ENCODE measurements at regions of chr1 and their contacts with region 1.

Region 1: DNA sequence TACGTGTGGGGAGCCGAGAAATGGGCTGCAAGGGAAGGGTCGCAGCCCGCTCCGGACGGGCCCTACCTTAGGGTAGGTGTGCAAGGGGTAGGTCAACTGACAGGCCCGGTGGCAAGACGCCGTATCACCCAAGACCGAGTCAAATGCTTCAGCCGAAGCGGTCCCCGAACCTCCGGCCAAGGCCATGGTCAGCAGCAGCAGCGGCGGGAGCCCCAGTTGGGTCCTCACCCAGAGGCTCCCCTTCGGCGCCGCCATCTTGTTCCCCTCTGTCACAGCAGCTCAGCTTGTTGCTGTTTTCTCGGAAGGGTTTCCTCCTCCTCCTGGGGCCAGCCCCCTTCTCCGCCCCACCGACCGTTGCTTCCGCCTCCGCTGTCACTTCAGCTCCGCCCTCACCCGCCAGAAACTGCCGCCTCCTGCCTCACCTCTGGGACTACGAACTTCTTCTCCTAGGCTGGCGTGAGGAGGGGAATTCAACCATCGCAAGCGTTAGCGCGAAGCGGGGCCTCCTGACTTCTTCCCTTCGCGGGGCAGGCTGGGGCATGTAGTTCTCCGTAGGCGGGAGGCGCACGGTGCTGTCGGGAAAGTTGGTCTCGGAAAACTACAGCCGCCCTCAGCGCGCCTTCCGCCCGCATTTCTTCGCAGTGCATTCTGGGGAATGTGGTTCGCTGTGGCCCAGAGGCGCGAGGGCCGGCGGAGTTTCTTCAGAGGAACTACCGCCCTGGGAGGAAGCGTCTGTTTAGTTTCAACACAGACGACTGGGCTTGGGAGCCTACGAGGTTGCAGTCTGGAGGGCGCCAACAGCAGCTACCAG is at the starts of genes TCEANC2 and TMEM59:
- DNase-seq: peak; percentile 99
- H3K4me3 Mint-ChIP-seq: no peak within 1 kb of the TSS
- H3K27ac Mint-ChIP-seq: no peak within 1 kb of the TSS
- H3K4me1 Mint-ChIP-seq: peaks cover 37% of the 10 kb centered on the region
- H3K27me3 Mint-ChIP-seq: no peaks in the 10 kb centered on the region
- total RNA-seq, gene TCEANC2: 13.0 TPM
- total RNA-seq, gene TMEM59: 140 to 142 TPM

Region 2: DNA sequence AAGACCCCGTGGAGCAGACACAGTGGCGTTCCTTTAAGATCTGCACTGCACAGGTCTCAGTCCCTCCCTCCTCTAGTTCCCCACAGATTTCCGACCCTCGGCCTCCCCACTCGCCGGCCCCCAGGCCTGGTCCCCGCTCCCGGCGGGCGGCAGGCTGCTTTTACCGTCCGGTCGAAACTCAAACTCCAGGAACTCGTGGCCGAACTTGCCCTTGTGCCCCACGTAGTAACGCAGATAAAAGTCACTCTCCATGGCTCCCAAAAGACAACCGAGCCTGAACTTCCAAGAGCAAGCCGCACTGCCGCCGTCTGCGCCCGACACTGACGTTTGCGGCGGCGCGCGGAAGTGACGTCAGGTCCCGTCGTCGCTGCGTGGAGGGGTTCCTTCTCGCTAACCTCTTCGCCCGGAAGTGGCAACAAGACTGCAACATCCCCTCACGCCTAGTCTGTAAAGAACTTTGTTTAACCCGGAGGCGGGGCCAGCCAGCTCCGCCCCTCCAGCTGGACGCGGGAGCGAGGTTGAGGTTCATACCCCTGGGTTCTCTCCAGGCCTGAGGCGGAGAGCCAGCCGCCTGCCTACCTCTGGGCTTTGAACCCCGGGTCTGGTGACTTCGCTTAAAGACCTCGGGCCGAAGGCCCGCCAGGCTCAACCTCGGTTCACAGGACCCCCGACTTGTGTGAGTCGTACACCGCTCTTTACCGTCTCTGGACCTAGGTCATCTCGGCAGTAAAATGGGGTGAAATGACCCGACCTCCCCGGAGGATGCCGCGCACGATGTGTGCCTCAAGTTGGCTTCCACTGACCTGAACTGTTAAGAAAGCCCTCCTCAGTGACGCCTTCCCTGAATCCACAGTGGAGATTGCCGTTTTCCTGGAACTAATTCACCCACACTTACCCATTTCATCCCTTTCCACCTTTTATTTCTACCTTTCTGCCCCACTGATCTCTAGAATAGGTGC is 814.7 kb before region 1 on chr1 and contains the start of gene MAGOH:
- CTCF ChIA-PET with region 1: no interaction called
- intact Hi-C with region 1: loop called (anchors 1 kb)
- DNase-seq: peak; percentile 96
- H3K4me3 Mint-ChIP-seq: peak within 1 kb of the TSS; percentile 94
- H3K27ac Mint-ChIP-seq: peak within 1 kb of the TSS; percentile 82
- H3K4me1 Mint-ChIP-seq: peaks cover 28% of the 10 kb centered on the region
- H3K27me3 Mint-ChIP-seq: no peaks in the 10 kb centered on the region
- total RNA-seq, gene MAGOH: 83.7 to 87.2 TPM

Region 3: GRCh38 chr1:53889304-53890298 is 163.5 kb before region 1 on chr1 and contains the start of gene YIPF1:
- CTCF ChIA-PET with region 1: interaction called, 4 read pairs
- intact Hi-C with region 1: loop called (anchors 1 kb)
- DNase-seq: peak; percentile 91
- H3K4me3 Mint-ChIP-seq: peak within 1 kb of the TSS; percentile 94
- H3K27ac Mint-ChIP-seq: peak within 1 kb of the TSS; percentile 99
- H3K4me1 Mint-ChIP-seq: peaks cover 39% of the 10 kb centered on the region
- H3K27me3 Mint-ChIP-seq: no peaks in the 10 kb centered on the region
- total RNA-seq, gene YIPF1: 22.2 to 22.4 TPM

Region 4: DNA sequence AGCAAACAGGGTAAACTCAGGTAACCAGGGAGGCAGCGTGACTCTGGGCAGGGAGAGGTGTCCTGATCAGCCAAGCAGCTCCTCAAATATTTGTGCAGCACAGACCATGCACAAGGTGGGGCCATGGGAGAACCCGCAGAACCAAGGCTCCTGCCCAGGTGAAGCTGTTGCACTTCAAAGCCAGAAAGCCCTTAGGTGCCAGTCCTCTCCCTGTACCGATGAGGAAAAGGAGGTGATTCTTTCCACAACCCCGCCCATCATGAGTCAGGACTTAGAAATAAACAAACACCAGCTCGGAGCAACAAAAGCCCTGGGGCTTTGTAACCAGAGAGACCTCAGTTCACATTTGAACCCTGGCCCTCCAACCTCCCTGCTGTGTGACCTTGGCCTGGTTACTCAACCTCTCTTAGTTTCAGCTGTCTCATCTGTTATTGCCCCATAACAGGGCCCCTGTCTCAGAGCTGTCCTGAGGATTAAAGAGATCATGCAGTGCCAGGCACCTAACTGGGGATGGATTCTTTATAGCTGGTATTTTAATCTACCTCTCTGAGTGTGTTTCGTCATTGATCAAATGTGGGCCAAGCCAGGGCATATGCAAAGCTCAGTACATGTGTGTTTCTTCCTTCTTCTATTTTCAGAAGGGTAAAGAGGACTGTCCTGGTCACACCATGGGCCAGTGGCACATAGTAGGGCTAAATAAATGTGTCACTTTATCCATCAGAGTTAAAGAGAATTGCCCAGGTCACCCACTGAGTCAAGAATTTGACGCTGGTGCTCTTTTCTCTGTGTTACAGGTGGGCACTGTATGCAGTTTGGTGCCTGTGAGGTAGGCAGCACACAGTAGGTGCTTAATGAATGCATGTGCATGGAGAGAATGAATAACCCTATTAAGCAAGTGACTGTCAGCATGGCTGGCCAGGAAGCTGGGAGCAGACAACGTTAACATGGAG is 36.6 kb before region 1 on chr1:
- CTCF ChIA-PET with region 1: no interaction called
- intact Hi-C with region 1: no loop called
- DNase-seq: no peak
- H3K4me3 Mint-ChIP-seq: no peak overlapping the region
- H3K27ac Mint-ChIP-seq: no peak overlapping the region
- H3K4me1 Mint-ChIP-seq: no peaks in the 10 kb centered on the region
- H3K27me3 Mint-ChIP-seq: peaks cover 3% of the 10 kb centered on the region

Region 5: DNA sequence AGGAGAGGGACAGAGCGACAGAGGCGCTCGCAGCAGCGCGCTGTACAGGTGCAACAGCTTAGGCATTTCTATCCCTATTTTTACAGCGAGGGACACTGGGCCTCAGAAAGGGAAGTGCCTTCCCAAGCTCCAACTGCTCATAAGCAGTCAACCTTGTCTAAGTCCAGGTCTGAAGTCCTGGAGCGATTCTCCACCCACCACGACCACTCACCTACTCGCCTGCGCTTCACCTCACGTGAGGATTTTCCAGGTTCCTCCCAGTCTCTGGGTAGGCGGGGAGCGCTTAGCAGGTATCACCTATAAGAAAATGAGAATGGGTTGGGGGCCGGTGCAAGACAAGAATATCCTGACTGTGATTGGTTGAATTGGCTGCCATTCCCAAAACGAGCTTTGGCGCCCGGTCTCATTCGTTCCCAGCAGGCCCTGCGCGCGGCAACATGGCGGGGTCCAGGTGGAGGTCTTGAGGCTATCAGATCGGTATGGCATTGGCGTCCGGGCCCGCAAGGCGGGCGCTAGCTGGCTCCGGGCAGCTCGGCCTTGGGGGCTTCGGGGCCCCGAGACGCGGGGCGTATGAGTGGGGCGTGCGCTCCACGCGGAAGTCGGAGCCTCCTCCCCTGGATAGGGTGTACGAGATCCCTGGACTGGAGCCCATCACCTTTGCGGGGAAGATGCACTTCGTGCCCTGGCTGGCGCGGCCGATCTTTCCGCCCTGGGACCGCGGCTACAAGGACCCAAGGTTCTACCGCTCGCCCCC is 146.8 kb after region 1 on chr1 and contains the starts of genes CYB5RL and MRPL37:
- CTCF ChIA-PET with region 1: no interaction called
- intact Hi-C with region 1: loop called (anchors 1 kb)
- DNase-seq: peak; percentile 96
- H3K4me3 Mint-ChIP-seq: peak within 1 kb of the TSS; percentile 92
- H3K27ac Mint-ChIP-seq: peak within 1 kb of the TSS; percentile 59
- H3K4me1 Mint-ChIP-seq: peaks cover 32% of the 10 kb centered on the region
- H3K27me3 Mint-ChIP-seq: no peaks in the 10 kb centered on the region
- total RNA-seq, gene CYB5RL: 12.7 to 13.6 TPM
- total RNA-seq, gene MRPL37: 203 to 211 TPM

Region 6: GRCh38 chr1:54355931-54356679 is 303.0 kb after region 1 on chr1:
- CTCF ChIA-PET with region 1: no interaction called
- intact Hi-C with region 1: loop called (anchors 1 kb)
- DNase-seq: peak; percentile 56
- H3K4me3 Mint-ChIP-seq: peak overlapping the region; percentile 80
- H3K27ac Mint-ChIP-seq: peak overlapping the region; percentile 88
- H3K4me1 Mint-ChIP-seq: peaks cover 91% of the 10 kb centered on the region
- H3K27me3 Mint-ChIP-seq: no peaks in the 10 kb centered on the region

Region 7: DNA sequence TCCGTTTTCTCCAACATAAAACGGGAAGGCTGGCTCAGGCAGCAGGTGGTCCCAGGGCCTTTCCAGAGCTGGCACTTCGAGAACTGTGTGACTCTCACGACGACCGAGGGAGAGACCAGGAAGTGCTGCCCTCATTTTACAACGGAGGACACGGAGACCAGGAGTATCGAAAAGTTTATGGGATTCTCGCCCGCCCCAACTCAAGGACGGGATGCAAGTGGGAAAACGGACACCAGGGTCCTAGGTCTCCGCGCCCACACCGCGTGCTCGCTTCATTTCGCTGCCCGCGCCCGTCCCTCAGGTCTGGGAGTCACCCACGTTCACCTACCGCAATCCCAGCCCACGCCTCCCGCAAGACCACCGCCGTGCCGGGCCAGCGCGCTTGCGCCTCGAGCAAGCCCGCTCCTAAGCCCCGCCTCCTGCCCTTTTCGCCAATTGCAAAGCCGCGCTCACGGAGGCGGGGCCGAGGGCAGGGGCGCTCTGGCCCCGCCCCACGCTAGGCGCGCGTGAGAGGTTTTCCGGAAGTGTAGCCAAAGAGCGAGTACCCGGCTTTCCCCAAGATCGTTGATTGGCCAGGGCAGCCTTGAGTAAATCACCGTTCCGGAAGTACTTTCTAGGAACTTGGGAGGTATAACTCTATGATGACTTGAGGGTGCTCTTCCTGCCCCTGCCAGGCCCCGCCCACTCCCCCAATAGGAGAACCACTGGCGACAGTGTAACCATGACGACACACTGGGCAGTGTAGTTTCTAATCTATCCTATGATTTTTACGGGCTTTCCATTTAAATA is 711.2 kb after region 1 on chr1 and contains the start of gene PARS2:
- CTCF ChIA-PET with region 1: no interaction called
- intact Hi-C with region 1: loop called (anchors 1 kb)
- DNase-seq: peak; percentile 96
- H3K4me3 Mint-ChIP-seq: peak within 1 kb of the TSS; percentile 94
- H3K27ac Mint-ChIP-seq: peak within 1 kb of the TSS; percentile 83
- H3K4me1 Mint-ChIP-seq: peaks cover 19% of the 10 kb centered on the region
- H3K27me3 Mint-ChIP-seq: no peaks in the 10 kb centered on the region
- total RNA-seq, gene PARS2: 3.0 to 3.1 TPM

Measured in activated naive CD4-positive, alpha-beta T cell treated with anti-CD3 and anti-CD28 coated beads for 36 hours (primary cell).